Activated CD4-positive, alpha-beta memory T cell treated with anti-CD3 and anti-CD28 coated beads, Interleukin-2, amount 10 ng/mL, durations not matched to agents 7 days and 5 days (primary cell): ENCODE measurements at regions of chr4 and their contacts with region 1.

Region 1: GRCh38 chr4:40056716-40057585 is at the start of gene N4BP2:
- DNase-seq: peak; percentile 75
- H3K4me3 Mint-ChIP-seq: peak within 1 kb of the TSS; percentile 97
- H3K27ac Mint-ChIP-seq: peak within 1 kb of the TSS; percentile 99
- H3K4me1 Mint-ChIP-seq: peaks cover 37% of the 10 kb centered on the region
- H3K27me3 Mint-ChIP-seq: no peaks in the 10 kb centered on the region
- total RNA-seq, gene N4BP2: 22.5 to 26.8 TPM

Region 2: GRCh38 chr4:39638354-39639240 is 418.4 kb before region 1 on chr4 and contains the start of gene SMIM14:
- CTCF ChIA-PET with region 1: no interaction called
- POLR2A ChIA-PET with region 1: interaction called, 10 read pairs
- DNase-seq: peak; percentile 90
- H3K4me3 Mint-ChIP-seq: peak within 1 kb of the TSS; percentile 84
- H3K27ac Mint-ChIP-seq: peak within 1 kb of the TSS; percentile 76
- H3K4me1 Mint-ChIP-seq: peaks cover 31% of the 10 kb centered on the region
- H3K27me3 Mint-ChIP-seq: peaks cover 3% of the 10 kb centered on the region
- total RNA-seq, gene SMIM14: 7.2 to 7.6 TPM

Region 3: DNA sequence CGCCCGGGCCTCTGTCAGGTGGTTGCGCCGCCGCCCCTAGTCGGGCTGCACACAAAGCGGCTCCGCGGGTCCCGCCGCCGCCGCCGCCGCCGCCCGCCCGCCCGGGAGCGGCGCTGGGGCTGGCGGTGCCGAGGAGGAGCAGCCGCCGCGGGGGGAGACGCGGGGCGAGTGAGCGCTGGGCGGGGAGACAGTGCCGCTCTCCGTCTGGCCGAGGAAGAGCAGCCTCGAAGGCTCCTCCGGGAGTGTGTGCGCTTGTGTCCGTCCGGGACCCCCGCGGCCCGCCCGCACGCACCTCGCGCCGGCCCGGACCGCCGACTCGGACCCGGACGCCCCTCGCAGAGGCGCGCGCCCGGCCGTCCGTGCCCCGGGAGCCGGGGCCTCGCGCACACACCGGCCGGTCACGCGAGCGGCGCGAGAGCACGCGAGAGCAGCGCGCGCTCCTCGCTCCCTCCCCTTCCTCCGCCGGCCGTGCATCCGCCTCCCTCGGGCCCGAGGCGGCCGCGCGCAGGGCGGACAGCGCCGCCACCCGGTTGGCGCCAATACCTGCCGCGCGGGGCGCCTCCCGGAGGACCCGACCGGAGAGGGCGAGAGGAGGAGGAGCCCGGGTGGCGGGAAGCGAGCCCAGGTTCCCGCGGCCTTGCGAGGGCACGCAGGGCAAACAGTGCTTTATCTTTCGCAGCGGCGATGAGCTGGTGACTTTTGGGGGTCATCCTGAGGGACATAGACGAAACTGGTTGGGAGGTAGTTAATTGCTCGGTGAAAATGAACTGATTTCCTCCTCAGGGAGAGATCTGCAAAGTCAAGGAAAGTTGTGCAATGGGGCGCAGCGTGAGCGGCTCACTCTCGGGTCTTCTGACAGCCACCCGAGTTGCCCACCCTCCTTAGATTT is 79.2 kb before region 1 on chr4 and contains the start of gene PDS5A:
- CTCF ChIA-PET with region 1: interaction called, 19 read pairs
- POLR2A ChIA-PET with region 1: interaction called, 9 read pairs
- DNase-seq: peak; percentile 93
- H3K4me3 Mint-ChIP-seq: peak within 1 kb of the TSS; percentile 87
- H3K27ac Mint-ChIP-seq: peak within 1 kb of the TSS; percentile 90
- H3K4me1 Mint-ChIP-seq: peaks cover 41% of the 10 kb centered on the region
- H3K27me3 Mint-ChIP-seq: no peaks in the 10 kb centered on the region
- total RNA-seq, gene PDS5A: 97.8 to 99.6 TPM

Region 4: DNA sequence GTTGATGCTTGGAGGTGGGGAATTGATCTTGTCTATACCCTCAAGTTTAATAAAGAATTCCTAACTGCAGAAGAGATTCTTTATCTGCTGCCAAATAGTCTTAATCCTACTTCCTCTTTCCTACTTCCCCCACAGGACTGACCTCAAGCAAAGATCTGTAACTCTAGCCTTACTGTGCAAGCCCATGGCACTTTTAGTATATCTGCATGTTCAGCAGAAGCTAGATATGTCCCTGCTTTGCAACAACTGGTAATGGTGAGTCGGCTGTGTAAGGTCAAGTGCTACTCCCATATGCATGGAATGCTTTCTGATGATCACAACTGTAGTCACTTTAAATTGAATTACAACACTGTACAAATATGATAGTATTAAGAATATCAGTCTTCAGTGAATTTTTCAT is 53.0 kb before region 1 on chr4:
- CTCF ChIA-PET with region 1: no interaction called
- POLR2A ChIA-PET with region 1: no interaction called
- DNase-seq: no peak
- H3K4me3 Mint-ChIP-seq: no peak overlapping the region
- H3K27ac Mint-ChIP-seq: no peak overlapping the region
- H3K4me1 Mint-ChIP-seq: no peaks in the 10 kb centered on the region
- H3K27me3 Mint-ChIP-seq: no peaks in the 10 kb centered on the region

Region 5: DNA sequence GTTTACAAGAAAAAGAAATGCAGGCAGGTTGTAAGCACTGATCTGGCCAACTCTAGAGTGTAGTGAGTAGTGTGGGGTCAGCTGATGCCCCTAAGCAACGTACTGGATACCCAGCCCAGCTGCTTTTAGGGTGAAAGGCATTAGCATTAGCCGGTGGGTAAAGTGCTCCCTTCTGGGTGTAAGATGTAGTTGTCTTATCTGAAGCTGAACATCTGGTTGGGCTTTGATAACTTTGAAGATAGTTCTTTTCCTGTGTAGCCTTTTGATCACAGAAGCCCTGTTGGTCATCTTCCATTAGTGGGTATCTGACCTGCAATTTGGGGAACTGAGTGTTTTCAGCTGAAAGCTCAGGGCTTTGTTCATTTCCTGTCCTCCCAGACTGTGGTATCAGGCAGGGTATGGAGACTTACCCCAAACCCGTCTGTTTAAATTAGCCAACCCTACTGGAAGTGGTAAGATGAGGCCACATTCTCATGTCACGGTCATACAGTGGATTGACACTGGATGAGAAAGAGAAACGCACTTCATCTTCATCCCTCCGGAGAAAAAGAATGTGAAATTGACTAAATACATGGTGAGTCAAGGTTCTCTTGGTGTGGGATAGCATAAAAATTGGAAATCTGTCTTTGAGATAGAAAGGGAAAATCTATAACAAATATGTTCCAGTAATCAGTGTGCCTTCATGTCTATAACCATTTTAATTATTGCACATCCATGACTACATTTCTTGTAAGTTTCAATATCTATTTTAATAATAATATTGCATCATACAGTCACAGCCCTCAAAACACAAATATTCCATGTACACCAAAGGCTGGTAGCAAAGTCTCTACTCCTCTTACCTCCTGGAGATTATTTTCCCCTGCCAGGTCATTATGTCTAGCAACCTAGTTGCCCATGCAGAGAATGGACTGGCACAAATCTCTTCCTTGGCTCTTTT is 148.6 kb after region 1 on chr4:
- CTCF ChIA-PET with region 1: interaction called, 13 read pairs
- POLR2A ChIA-PET with region 1: interaction called, 159 read pairs
- DNase-seq: peak; percentile 66
- H3K4me3 Mint-ChIP-seq: peak overlapping the region; percentile 97
- H3K27ac Mint-ChIP-seq: peak overlapping the region; percentile 99
- H3K4me1 Mint-ChIP-seq: peaks cover 64% of the 10 kb centered on the region
- H3K27me3 Mint-ChIP-seq: no peaks in the 10 kb centered on the region

Region 6: DNA sequence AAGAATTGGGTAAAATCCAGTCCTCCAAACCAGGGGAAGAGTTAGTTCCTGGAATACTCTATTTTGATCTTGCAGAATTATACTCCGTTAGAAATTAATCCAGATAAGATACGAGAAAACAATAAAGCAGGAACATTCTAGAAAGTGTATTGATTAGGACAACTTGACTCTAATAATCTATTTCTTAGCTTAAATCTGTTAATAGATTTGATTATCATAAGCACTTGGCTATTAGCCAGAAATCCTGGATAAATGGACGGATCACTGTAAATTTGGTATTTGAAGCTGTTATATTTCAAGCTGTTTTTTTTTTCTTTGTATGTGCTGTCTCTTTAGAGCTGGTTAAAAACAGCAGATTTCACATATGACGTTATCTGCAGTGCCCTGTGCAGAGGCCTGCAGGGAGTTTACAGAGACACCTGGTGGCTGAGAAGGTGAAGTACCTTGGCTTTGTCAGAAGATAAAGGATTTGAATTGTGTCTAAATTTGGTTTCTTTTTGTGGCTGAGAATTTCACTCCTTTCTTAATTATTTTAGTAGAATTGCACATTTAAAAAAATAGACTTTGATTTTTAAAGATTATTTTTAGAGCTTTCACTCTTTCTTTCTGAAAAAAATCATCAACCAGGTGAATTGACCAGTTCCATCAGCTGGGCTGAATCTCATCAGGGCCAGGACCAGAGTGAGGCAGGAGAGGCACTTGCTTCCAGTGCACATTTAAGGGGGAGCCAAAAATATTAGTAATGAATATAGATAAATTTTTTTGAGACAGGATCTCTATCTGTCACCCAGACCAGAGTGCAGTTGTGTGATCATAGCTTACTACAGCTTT is 268.5 kb after region 1 on chr4:
- CTCF ChIA-PET with region 1: interaction called, 25 read pairs
- POLR2A ChIA-PET with region 1: interaction called, 9 read pairs
- DNase-seq: peak; percentile 69
- H3K4me3 Mint-ChIP-seq: no peak overlapping the region
- H3K27ac Mint-ChIP-seq: no peak overlapping the region
- H3K4me1 Mint-ChIP-seq: peaks cover 18% of the 10 kb centered on the region
- H3K27me3 Mint-ChIP-seq: peaks cover 2% of the 10 kb centered on the region